ENCODE measurements at regions of chr7 and their contacts with region 1.

Region 1: DNA sequence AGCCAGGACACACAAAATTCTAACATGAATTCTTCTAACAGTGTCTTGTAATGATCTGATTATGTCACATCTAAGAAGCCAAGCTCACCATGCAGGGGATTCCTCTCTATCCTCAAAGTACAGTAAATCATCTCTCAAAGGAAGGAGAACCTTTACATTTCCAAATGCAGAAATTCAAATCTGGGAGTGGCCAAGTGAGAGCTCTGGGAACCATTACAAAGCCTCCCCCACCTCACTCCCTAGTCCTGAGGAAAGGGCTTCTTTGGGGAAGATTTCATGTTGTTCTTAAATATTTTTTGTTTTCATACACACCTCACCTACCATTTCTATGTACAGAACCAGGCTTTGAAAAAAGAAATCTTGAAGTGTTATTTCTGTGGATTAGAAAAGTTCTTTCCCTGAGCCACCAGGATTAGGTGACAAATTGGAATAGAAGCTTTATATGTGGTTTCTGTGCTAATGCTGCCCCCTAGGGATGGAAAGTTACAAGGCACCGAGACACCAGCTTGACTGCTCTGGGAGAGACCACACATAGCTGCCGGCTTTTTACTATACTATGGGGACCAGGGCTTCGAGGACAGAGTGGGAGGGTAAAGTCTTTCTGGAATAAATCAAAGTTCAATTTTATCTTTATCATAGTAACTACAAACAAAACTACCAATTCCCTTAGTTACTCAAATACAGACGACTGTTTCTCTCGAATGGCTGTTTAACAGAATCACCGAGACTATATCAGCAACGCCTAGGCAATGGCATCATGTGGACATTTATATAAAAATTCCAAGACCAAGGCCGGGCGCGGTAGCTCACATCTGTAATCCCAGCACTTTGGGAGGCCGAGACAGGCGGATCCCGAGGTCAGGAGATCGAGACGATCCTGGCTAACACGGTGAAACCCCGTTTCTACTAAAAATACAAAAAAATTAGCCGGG is 116.1 kb downstream of the RNF216 start:
- DNase-seq: peak; percentile 84
- H3K4me3 ChIP-seq: no peak overlapping the region
- H3K27ac ChIP-seq: peak overlapping the region; percentile 12
- H3K4me1 ChIP-seq: peaks cover 37% of the 10 kb centered on the region
- H3K27me3 ChIP-seq: no peaks in the 10 kb centered on the region
- CTCF ChIP-seq: peak; percentile 78 to 81
- POLR2A ChIP-seq: no peak

Region 2: GRCh38 chr7:5494683-5495561 is 170.4 kb before region 1 on chr7:
- CTCF ChIA-PET with region 1: interaction called, 71 read pairs
- POLR2A ChIA-PET with region 1: no interaction called
- dilution Hi-C with region 1: loop called (anchors 10 kb)
- intact Hi-C with region 1: loop called (anchors 1 kb)
- DNase-seq: peak; percentile 72
- H3K4me3 ChIP-seq: no peak overlapping the region
- H3K27ac ChIP-seq: no peak overlapping the region
- H3K4me1 ChIP-seq: peaks cover 4% of the 10 kb centered on the region
- H3K27me3 ChIP-seq: no peaks in the 10 kb centered on the region
- CTCF ChIP-seq: peak; percentile 79 to 96
- POLR2A ChIP-seq: no peak

Region 3: GRCh38 chr7:5574770-5575269 is 90.5 kb before region 1 on chr7:
- CTCF ChIA-PET with region 1: interaction called, 11 read pairs
- POLR2A ChIA-PET with region 1: no interaction called
- dilution Hi-C with region 1: no loop called
- intact Hi-C with region 1: no loop called
- DNase-seq: peak; percentile 78
- H3K4me3 ChIP-seq: peak overlapping the region in 1 of 3 experiments; percentile 1
- H3K27ac ChIP-seq: peak overlapping the region; percentile 72
- H3K4me1 ChIP-seq: peaks cover 16% of the 10 kb centered on the region
- H3K27me3 ChIP-seq: no peaks in the 10 kb centered on the region
- CTCF ChIP-seq: no peak
- POLR2A ChIP-seq: no peak

Region 4: GRCh38 chr7:5607951-5608656 is 57.3 kb before region 1 on chr7:
- CTCF ChIA-PET with region 1: interaction called, 45 read pairs
- POLR2A ChIA-PET with region 1: no interaction called
- dilution Hi-C with region 1: no loop called
- intact Hi-C with region 1: no loop called
- DNase-seq: no peak
- H3K4me3 ChIP-seq: no peak overlapping the region
- H3K27ac ChIP-seq: no peak overlapping the region
- H3K4me1 ChIP-seq: peaks cover 5% of the 10 kb centered on the region
- H3K27me3 ChIP-seq: no peaks in the 10 kb centered on the region
- CTCF ChIP-seq: no peak
- POLR2A ChIP-seq: peak; percentile 37

Region 5: DNA sequence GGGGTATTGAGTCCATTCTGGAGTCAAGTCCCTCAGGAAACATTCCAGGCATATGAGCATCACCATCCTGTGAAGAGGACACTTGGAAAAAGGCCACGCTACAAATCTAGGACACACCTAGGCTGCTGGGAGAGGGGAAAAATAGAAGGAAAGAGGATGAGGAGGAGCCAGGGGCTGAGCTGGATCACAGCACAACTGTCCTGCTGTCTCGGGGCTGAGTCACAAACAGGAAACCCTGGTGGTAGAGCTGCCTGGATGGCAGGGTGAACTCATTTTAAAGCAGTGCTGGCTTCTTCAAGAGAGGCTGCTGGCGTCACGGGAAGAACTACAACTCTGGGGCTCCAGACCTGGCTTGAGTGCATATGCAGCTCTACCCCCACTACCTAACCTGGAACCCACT is 35.4 kb before region 1 on chr7:
- CTCF ChIA-PET with region 1: interaction called, 29 read pairs
- POLR2A ChIA-PET with region 1: interaction called, 3 read pairs
- dilution Hi-C with region 1: no loop called
- intact Hi-C with region 1: loop called (anchors 1 kb)
- DNase-seq: peak; percentile 55
- H3K4me3 ChIP-seq: no peak overlapping the region
- H3K27ac ChIP-seq: peak overlapping the region; percentile 22
- H3K4me1 ChIP-seq: peaks cover 31% of the 10 kb centered on the region
- H3K27me3 ChIP-seq: no peaks in the 10 kb centered on the region
- CTCF ChIP-seq: peak in 1 of 2 donors; percentile 15
- POLR2A ChIP-seq: no peak

Region 6: GRCh38 chr7:5677538-5678294 is 12.4 kb after region 1 on chr7:
- CTCF ChIA-PET with region 1: interaction called, 105 read pairs
- POLR2A ChIA-PET with region 1: interaction called, 3 read pairs
- dilution Hi-C with region 1: no loop called
- intact Hi-C with region 1: loop called (anchors 1 kb)
- DNase-seq: peak; percentile 84
- H3K4me3 ChIP-seq: peak overlapping the region in 1 of 3 experiments; percentile 17
- H3K27ac ChIP-seq: peak overlapping the region; percentile 75
- H3K4me1 ChIP-seq: peaks cover 17% of the 10 kb centered on the region
- H3K27me3 ChIP-seq: no peaks in the 10 kb centered on the region
- CTCF ChIP-seq: peak; percentile 77 to 81
- POLR2A ChIP-seq: no peak

Region 7: GRCh38 chr7:5780801-5781496 is 115.6 kb after region 1 on chr7:
- CTCF ChIA-PET with region 1: no interaction called
- POLR2A ChIA-PET with region 1: no interaction called
- dilution Hi-C with region 1: no loop called
- intact Hi-C with region 1: no loop called
- DNase-seq: peak; percentile 46
- H3K4me3 ChIP-seq: peak overlapping the region; percentile 73 to 93 (median 73)
- H3K27ac ChIP-seq: peak overlapping the region; percentile 30
- H3K4me1 ChIP-seq: peaks cover 3% of the 10 kb centered on the region
- H3K27me3 ChIP-seq: no peaks in the 10 kb centered on the region
- CTCF ChIP-seq: no peak
- POLR2A ChIP-seq: no peak

Region 8: GRCh38 chr7:6283391-6284390 is 618.3 kb after region 1 on chr7:
- CTCF ChIA-PET with region 1: no interaction called
- POLR2A ChIA-PET with region 1: no interaction called
- dilution Hi-C with region 1: no loop called
- intact Hi-C with region 1: no loop called
- DNase-seq: no peak
- H3K4me3 ChIP-seq: no peak overlapping the region
- H3K27ac ChIP-seq: no peak overlapping the region
- H3K4me1 ChIP-seq: peaks cover 9% of the 10 kb centered on the region
- H3K27me3 ChIP-seq: no peaks in the 10 kb centered on the region
- CTCF ChIP-seq: no peak
- POLR2A ChIP-seq: no peak

Measured in endothelial cell of umbilical vein (primary cell).